ENCODE measurements at regions of chr15 and their contacts with region 1.

Region 1: GRCh38 chr15:67065444-67066093 is at the start of gene SMAD3:
- DNase-seq: peak; percentile 85
- ATAC-seq: peak; percentile 71
- H3K4me3 Mint-ChIP-seq: peak within 1 kb of the TSS; percentile 95
- H3K27ac Mint-ChIP-seq: peak within 1 kb of the TSS; percentile 87
- H3K4me1 Mint-ChIP-seq: peaks cover 52% of the 10 kb centered on the region
- H3K27me3 Mint-ChIP-seq: peaks cover 20% of the 10 kb centered on the region
- total RNA-seq, gene SMAD3: 26.8 to 27.1 TPM

Region 2: DNA sequence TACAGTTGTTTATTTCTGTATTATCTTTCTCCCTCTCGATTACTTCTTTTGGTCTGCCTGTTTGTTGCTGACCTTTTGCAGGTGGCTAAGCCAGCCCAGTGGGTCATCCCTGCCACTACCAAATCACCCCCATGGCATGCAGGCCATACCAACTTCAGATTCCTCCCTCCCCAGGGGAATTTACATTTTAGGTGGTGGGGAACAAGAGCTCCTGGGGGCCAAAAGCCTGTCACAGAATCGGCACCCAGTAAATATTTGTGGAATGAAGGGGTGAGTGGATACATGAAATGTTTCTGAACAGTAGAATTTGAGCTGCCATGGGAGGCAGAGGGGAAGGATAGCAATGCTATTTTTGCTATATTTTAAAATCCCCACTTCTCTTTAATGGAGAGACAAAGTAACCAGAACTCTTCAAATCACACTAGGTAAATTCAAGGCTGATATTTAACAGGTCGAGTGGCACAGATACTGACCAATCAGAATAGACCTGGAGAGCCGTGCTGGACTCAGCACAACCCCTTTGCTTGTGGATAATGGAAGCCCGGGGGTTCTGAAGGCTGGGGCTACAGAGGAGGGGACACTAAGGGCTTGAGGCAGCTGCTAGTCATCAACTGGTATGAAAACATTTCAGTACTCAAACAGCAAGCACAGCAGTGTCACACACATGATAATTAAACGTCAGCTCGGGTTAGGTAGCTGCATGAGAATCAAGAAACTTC is 54.5 kb before region 1 on chr15:
- CTCF ChIA-PET with region 1: no interaction called
- POLR2A ChIA-PET with region 1: no interaction called
- DNase-seq: no peak
- ATAC-seq: no peak
- H3K4me3 Mint-ChIP-seq: no peak overlapping the region
- H3K27ac Mint-ChIP-seq: no peak overlapping the region
- H3K4me1 Mint-ChIP-seq: peaks cover 6% of the 10 kb centered on the region
- H3K27me3 Mint-ChIP-seq: peaks cover 8% of the 10 kb centered on the region

Region 3: GRCh38 chr15:67080900-67081431 is 15.4 kb after region 1 on chr15:
- CTCF ChIA-PET with region 1: interaction called, 33 read pairs
- POLR2A ChIA-PET with region 1: interaction called, 124 read pairs
- DNase-seq: peak; percentile 49
- ATAC-seq: no peak
- H3K4me3 Mint-ChIP-seq: no peak overlapping the region
- H3K27ac Mint-ChIP-seq: peak overlapping the region; percentile 29
- H3K4me1 Mint-ChIP-seq: peaks cover 91% of the 10 kb centered on the region
- H3K27me3 Mint-ChIP-seq: no peaks in the 10 kb centered on the region

Region 4: GRCh38 chr15:67120839-67121643 is 55.5 kb after region 1 on chr15:
- CTCF ChIA-PET with region 1: interaction called, 9 read pairs
- POLR2A ChIA-PET with region 1: interaction called, 13 read pairs
- DNase-seq: peak; percentile 82
- ATAC-seq: peak; percentile 93
- H3K4me3 Mint-ChIP-seq: peak overlapping the region; percentile 58
- H3K27ac Mint-ChIP-seq: peak overlapping the region; percentile 95
- H3K4me1 Mint-ChIP-seq: peaks cover 85% of the 10 kb centered on the region
- H3K27me3 Mint-ChIP-seq: no peaks in the 10 kb centered on the region

Region 5: GRCh38 chr15:67178569-67179210 is 113.1 kb after region 1 on chr15:
- CTCF ChIA-PET with region 1: no interaction called
- POLR2A ChIA-PET with region 1: no interaction called
- DNase-seq: no peak
- ATAC-seq: no peak
- H3K4me3 Mint-ChIP-seq: no peak overlapping the region
- H3K27ac Mint-ChIP-seq: no peak overlapping the region
- H3K4me1 Mint-ChIP-seq: peaks cover 28% of the 10 kb centered on the region
- H3K27me3 Mint-ChIP-seq: no peaks in the 10 kb centered on the region

Measured in activated CD8-positive, alpha-beta T cell treated with anti-CD3 and anti-CD28 coated beads, Interleukin-2, amount 10 ng/mL, durations not matched to agents 7 days and 5 days (primary cell).